Psoas muscle (tissue), 8 donors: ENCODE measurements at regions of chr17 and their contacts with region 1.

Region 1: DNA sequence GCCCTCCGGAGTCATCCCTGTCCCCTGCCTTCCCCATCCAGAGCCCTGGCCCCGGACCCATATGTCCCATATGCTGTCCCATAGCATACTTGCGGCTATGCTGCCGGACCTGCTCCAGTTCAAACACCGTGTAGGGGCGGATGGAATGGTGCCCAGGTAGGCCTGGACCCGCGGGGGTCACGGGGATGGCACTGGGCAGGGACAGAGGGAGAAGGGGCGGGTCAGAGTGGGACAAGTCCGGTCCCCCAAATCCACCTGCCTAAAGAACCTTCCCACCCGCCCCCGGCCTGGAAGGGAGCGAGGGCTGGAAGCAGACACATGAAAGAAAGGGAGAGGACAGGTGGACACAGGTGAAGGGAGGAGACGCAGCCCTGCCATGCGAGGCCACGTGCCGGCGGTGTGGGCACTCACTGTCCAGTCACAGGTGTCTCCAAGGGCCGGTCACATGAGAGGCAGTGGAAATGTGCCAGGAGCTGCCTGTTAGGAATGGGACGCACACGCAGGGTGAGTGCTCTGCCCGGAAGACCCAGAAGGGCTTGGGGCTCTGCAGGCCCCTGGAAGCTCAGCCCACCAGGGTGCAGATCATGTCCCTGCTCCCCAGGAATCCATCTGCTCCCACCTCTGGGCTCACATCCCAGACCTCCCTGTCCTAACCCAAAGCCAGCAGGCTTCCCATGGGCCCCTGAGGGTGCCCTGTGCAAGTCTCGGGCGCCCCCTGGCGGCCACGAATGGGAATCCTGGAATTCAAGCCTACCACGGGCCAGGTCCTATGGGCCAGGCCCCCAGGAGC is 14.0 kb downstream of the UBALD2 start:
- DNase-seq: peak; percentile 90 to 95
- ATAC-seq: peak; percentile 74 to 82 (median 74)
- H3K4me3 ChIP-seq: peak overlapping the region; percentile 36
- H3K27ac ChIP-seq: peak overlapping the region; percentile 23
- H3K4me1 ChIP-seq: peaks cover 16% of the 10 kb centered on the region
- H3K27me3 ChIP-seq: no peaks in the 10 kb centered on the region
- CTCF ChIP-seq: peak; percentile 100

Region 2: GRCh38 chr17:75753514-75754377 is 525.4 kb before region 1 on chr17:
- intact Hi-C with region 1: no loop called
- DNase-seq: peak; percentile 78 to 86
- ATAC-seq: peak; percentile 67 to 84 (median 72)
- H3K4me3 ChIP-seq: peak overlapping the region; percentile 63
- H3K27ac ChIP-seq: no peak overlapping the region
- H3K4me1 ChIP-seq: peaks cover 8% of the 10 kb centered on the region
- H3K27me3 ChIP-seq: no peaks in the 10 kb centered on the region
- CTCF ChIP-seq: peak; percentile 56

Region 3: GRCh38 chr17:76121932-76122430 is 157.2 kb before region 1 on chr17:
- intact Hi-C with region 1: loop called (anchors 1 to 2 kb)
- DNase-seq: peak in 1 of 2 donors; percentile 57
- ATAC-seq: peak; percentile 44 to 64 (median 46)
- H3K4me3 ChIP-seq: peak overlapping the region; percentile 64
- H3K27ac ChIP-seq: peak overlapping the region; percentile 46
- H3K4me1 ChIP-seq: no peaks in the 10 kb centered on the region
- H3K27me3 ChIP-seq: no peaks in the 10 kb centered on the region
- CTCF ChIP-seq: no peak

Region 4: GRCh38 chr17:76182016-76182764 is 97.0 kb before region 1 on chr17:
- intact Hi-C with region 1: loop called in 1 of 2 experiments (anchors 5 kb)
- DNase-seq: peak; percentile 90 to 92
- ATAC-seq: peak; percentile 81 to 87 (median 84)
- H3K4me3 ChIP-seq: no peak overlapping the region
- H3K27ac ChIP-seq: peak overlapping the region; percentile 34
- H3K4me1 ChIP-seq: peaks cover 32% of the 10 kb centered on the region
- H3K27me3 ChIP-seq: no peaks in the 10 kb centered on the region
- CTCF ChIP-seq: peak; percentile 78

Region 5: GRCh38 chr17:76191896-76192295 is 87.3 kb before region 1 on chr17:
- intact Hi-C with region 1: loop called (anchors 5 kb)
- DNase-seq: no peak
- ATAC-seq: no peak
- H3K4me3 ChIP-seq: no peak overlapping the region
- H3K27ac ChIP-seq: no peak overlapping the region
- H3K4me1 ChIP-seq: peaks cover 38% of the 10 kb centered on the region
- H3K27me3 ChIP-seq: no peaks in the 10 kb centered on the region
- CTCF ChIP-seq: no peak

Region 6: DNA sequence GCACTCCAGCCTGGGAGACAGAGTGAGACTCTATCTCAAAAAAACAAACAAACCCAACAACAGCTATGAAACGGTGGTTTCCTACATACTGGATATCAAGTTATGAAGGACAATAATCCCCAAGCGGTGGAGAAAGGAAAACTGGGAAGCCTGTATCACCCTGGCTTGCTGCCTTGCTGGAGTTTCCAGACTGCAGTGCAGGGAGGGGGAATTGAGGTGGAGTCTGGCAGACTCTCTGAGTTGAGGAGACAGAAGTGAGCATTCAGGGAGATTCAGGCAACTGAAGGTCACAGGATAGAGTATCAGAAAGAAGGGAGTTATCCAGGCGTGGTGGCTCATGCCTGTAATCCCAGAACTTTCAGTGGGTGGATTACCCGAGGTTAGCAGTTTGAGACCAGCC is 17.0 kb after region 1 on chr17:
- intact Hi-C with region 1: loop called in 1 of 2 experiments (anchors 2 kb)
- DNase-seq: no peak
- ATAC-seq: no peak
- H3K4me3 ChIP-seq: no peak overlapping the region
- H3K27ac ChIP-seq: no peak overlapping the region
- H3K4me1 ChIP-seq: no peaks in the 10 kb centered on the region
- H3K27me3 ChIP-seq: no peaks in the 10 kb centered on the region
- CTCF ChIP-seq: no peak

Region 7: GRCh38 chr17:76314392-76315227 is 35.5 kb after region 1 on chr17:
- intact Hi-C with region 1: no loop called
- DNase-seq: no peak
- ATAC-seq: peak in 3 of 4 donors; percentile 19 to 37 (median 37)
- H3K4me3 ChIP-seq: no peak overlapping the region
- H3K27ac ChIP-seq: no peak overlapping the region
- H3K4me1 ChIP-seq: no peaks in the 10 kb centered on the region
- H3K27me3 ChIP-seq: no peaks in the 10 kb centered on the region
- CTCF ChIP-seq: no peak